AG04450 (cell line): ENCODE measurements at regions of chr5 and their contacts with region 1.

Region 1: DNA sequence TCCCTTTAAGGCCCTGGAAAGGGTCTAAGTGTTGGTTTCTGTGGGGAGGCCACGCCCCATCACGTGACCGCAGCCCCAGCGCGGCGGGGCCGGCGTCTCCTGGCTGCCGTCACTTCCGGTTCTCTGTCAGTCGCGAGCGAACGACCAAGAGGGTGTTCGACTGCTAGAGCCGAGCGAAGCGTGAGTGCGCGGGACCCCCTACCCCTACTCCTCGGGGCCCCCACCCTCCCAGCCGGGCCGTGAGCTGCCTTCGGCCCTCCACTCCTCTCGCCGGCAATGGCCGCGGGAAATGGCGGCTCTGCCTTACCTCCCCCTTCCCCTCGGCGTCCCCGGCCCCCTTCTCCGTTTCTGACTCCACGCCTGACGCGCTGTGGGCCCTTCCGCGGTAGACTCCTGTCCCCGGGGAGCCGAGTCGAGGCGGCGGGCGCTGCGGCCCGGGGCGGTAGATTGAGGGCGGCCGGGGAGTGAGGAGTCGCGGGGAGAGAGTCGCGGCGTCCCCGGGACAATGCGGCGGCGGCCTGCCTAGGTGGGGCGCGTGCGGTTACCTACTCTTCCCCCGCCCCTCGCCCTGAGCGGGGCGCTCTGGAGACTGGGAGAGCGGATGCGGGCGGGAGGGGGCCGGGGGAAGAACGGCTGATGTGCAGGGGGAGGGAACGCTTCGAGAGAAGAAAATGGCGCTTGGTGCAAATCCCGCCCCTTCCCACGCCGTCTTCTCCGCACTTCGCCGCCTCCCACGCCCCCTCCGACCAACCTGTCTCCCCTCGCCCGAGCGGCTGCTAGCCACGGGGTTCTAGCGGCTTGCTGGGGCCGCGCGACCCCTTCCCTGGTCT is at the start of gene SUB1:
- DNase-seq: peak; percentile 70
- H3K4me3 ChIP-seq: peak within 1 kb of the TSS; percentile 92
- H3K27ac ChIP-seq: peak within 1 kb of the TSS; percentile 94
- H3K27me3 ChIP-seq: no peaks in the 10 kb centered on the region
- CTCF ChIP-seq: no peak
- polyA plus RNA-seq, gene SUB1: 220 and 367 TPM in 2 replicates

Region 2: DNA sequence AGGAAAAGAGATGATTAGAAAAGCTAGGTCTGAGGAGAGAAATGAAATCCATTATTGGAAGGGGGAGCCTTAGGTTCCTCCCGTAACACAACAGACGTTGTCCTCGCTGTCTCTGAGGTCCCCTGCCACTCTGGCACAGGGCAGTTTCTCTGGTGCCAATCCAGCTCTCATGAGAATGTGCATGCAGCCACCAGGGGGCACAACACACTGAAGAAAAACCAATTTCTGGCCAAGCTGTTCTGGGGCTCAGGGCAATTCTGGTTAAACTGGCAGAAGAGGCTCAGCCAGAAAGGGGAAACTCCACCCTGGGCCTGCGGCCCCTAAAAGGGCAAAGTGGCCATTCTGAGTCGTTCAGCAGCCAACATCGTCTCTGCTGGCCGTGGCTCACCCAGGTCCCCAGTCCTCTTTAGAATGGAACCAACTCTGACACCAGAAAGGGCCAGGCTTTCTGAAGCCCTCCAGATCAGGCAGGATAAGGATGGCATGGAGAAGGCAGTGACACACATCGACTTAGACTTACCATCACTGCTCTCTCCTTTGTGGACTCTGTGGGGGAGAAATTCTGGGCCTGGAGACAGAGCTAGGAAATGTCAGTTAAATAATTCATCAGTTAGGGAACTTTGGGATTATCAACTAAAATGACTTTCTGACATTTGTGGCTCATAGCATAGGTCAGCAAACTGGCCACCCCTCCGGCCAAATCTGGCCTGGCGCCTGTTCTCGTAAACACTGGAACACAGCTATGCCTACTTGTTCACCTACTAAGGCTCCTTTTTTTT is 353.0 kb before region 1 on chr5:
- CTCF ChIA-PET with region 1: interaction called, 43 read pairs
- POLR2A ChIA-PET with region 1: no interaction called
- DNase-seq: peak; percentile 34
- H3K4me3 ChIP-seq: no peak overlapping the region
- H3K27ac ChIP-seq: no peak overlapping the region
- H3K27me3 ChIP-seq: no peaks in the 10 kb centered on the region
- CTCF ChIP-seq: peak; percentile 80

Region 3: GRCh38 chr5:32410630-32411029 is 175.0 kb before region 1 on chr5:
- CTCF ChIA-PET with region 1: interaction called, 12 read pairs
- POLR2A ChIA-PET with region 1: no interaction called
- DNase-seq: no peak
- H3K4me3 ChIP-seq: no peak overlapping the region
- H3K27ac ChIP-seq: no peak overlapping the region
- H3K27me3 ChIP-seq: no peaks in the 10 kb centered on the region
- CTCF ChIP-seq: no peak

Region 4: GRCh38 chr5:32482193-32482592 is 103.5 kb before region 1 on chr5:
- CTCF ChIA-PET with region 1: interaction called, 407 read pairs
- POLR2A ChIA-PET with region 1: no interaction called
- DNase-seq: no peak
- H3K4me3 ChIP-seq: no peak overlapping the region
- H3K27ac ChIP-seq: no peak overlapping the region
- H3K27me3 ChIP-seq: no peaks in the 10 kb centered on the region
- CTCF ChIP-seq: no peak

Region 5: GRCh38 chr5:32498484-32498883 is 87.2 kb before region 1 on chr5:
- CTCF ChIA-PET with region 1: interaction called, 24 read pairs
- POLR2A ChIA-PET with region 1: no interaction called
- DNase-seq: no peak
- H3K4me3 ChIP-seq: no peak overlapping the region
- H3K27ac ChIP-seq: no peak overlapping the region
- H3K27me3 ChIP-seq: peaks cover 5% of the 10 kb centered on the region
- CTCF ChIP-seq: no peak

Region 6: GRCh38 chr5:32597041-32597629 is 11.5 kb after region 1 on chr5:
- CTCF ChIA-PET with region 1: interaction called, 13 read pairs
- POLR2A ChIA-PET with region 1: no interaction called
- DNase-seq: no peak
- H3K4me3 ChIP-seq: no peak overlapping the region
- H3K27ac ChIP-seq: no peak overlapping the region
- H3K27me3 ChIP-seq: no peaks in the 10 kb centered on the region
- CTCF ChIP-seq: no peak

Region 7: DNA sequence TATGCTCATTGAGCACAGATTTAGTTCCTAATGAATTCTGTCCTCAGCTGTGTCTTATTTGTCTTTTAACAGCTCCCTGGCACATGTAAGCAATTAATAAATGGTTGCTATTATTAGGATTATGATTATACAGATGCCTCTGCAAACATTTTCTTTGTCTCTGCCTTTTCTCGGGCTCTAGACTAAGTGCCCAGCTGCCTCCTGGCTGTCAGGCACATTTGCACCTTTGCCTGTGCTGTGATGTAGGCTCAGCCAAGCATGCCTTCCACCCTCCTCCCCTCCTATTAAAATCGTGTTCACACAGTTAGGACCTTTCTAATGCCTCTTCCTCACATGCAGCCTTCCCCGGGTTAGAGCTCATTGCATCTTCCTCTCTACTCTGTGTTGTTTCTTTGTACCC is 151.2 kb after region 1 on chr5:
- CTCF ChIA-PET with region 1: no interaction called
- POLR2A ChIA-PET with region 1: no interaction called
- DNase-seq: no peak
- H3K4me3 ChIP-seq: no peak overlapping the region
- H3K27ac ChIP-seq: no peak overlapping the region
- H3K27me3 ChIP-seq: no peaks in the 10 kb centered on the region
- CTCF ChIP-seq: no peak